Caco-2 (cell line): ENCODE measurements at regions of chr10 and their contacts with region 1.

Region 1: GRCh38 chr10:102132563-102133372 is at the start of gene PPRC1:
- DNase-seq: peak; percentile 97 to 99
- H3K4me3 ChIP-seq: peak within 1 kb of the TSS; percentile 92
- H3K4me3 Mint-ChIP-seq: peak within 1 kb of the TSS; percentile 94
- H3K27ac Mint-ChIP-seq: peak within 1 kb of the TSS; percentile 99
- H3K4me1 ChIP-seq: peaks cover 16% of the 10 kb centered on the region
- H3K4me1 Mint-ChIP-seq: peaks cover 7% of the 10 kb centered on the region
- H3K27me3 ChIP-seq: no peaks in the 10 kb centered on the region
- H3K27me3 Mint-ChIP-seq: no peaks in the 10 kb centered on the region
- CTCF ChIP-seq: peak; percentile 82 to 94
- total RNA-seq, gene PPRC1: 66.6 and 68.5 TPM in 2 replicates

Region 2: DNA sequence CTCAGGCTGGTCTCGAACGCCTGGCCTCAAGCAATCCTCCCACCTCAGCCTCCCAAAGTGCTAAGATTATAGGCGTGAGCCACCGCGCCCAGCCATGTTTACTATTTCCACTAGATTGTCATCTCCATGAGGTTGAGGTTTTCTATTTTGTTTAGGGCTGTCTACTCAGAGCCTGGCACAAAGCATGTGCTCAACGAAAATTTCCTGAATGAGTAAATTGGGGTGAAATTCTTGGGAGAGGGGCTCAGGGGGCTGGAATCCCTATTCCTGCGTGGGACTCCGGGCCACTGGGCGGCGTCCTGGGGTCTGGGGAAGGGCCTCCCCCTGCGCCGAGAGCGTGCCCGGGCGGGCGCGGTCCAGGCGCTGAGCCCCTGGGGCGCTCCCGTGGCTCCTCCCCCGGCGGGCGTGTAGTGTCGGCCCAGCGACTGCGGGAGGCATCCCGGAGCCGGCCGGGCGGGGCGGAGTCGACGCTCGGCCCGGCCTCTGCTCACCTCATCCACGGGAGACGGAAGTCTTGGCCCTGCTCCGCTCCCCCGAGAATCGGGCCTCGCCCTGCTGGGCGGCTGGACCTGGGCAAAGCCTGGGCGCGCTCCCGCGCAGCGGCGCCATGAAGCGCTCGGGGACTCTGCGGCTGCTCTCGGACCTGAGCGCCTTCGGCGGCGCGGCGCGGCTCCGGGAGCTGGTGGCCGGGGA is 67.8 kb before region 1 on chr10 and contains the start of gene HPS6:
- CTCF ChIA-PET with region 1: no interaction called
- POLR2A ChIA-PET with region 1: no interaction called
- intact Hi-C with region 1: loop called (anchors 5 kb)
- DNase-seq: peak; percentile 93 to 95
- H3K4me3 ChIP-seq: peak within 1 kb of the TSS; percentile 90
- H3K4me3 Mint-ChIP-seq: peak within 1 kb of the TSS; percentile 89
- H3K27ac Mint-ChIP-seq: peak within 1 kb of the TSS; percentile 88
- H3K4me1 ChIP-seq: peaks cover 9% of the 10 kb centered on the region
- H3K4me1 Mint-ChIP-seq: peaks cover 13% of the 10 kb centered on the region
- H3K27me3 ChIP-seq: no peaks in the 10 kb centered on the region
- H3K27me3 Mint-ChIP-seq: no peaks in the 10 kb centered on the region
- CTCF ChIP-seq: peak; percentile 17 to 32
- total RNA-seq, gene HPS6: 18.1 and 19.5 TPM in 2 replicates

Region 3: DNA sequence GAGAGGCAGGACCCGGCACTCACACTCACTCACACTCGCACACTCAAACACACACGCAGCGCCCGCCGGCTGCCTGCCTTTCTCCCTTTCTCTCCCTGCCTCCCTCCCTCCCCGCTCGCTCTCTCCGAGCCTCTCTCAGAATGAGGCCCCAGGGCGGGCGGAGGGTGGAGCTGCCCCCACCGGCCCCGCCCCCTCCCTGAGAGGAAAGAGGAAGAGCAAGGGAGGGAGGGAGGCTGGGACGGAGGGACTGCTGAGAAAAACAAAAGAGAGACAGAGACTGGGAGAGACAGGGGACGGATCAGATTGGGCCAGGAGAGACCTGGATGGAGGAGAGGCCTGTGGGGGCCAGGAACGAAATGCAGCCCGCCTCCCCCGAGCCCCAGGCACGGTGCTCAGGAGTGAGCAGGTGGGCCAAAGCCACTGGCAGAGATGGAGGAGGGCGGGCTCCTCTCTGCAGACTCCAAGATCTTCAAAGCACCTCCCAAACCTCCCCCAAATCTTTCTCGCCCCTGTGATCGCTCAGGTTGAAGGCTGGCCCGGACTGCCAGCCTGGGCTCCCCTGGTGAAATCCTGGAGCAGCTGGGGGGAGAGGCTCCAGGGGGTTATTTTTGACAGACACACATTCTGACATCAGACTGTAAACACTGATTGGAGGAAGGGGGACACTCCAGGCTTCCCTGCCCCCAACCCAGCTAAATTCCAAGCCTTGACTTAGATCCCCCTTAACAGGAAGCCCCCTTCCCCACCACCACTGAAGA is 17.7 kb before region 1 on chr10:
- CTCF ChIA-PET with region 1: interaction called, 3 read pairs
- POLR2A ChIA-PET with region 1: interaction called, 3 read pairs
- intact Hi-C with region 1: loop called (anchors 1 kb)
- DNase-seq: peak; percentile 88 to 89
- H3K4me3 ChIP-seq: peak overlapping the region; percentile 56
- H3K4me3 Mint-ChIP-seq: peak overlapping the region; percentile 95
- H3K27ac Mint-ChIP-seq: peak overlapping the region; percentile 94
- H3K4me1 ChIP-seq: peaks cover 26% of the 10 kb centered on the region
- H3K4me1 Mint-ChIP-seq: peaks cover 37% of the 10 kb centered on the region
- H3K27me3 ChIP-seq: no peaks in the 10 kb centered on the region
- H3K27me3 Mint-ChIP-seq: no peaks in the 10 kb centered on the region
- CTCF ChIP-seq: no peak

Region 4: GRCh38 chr10:102120142-102120990 is 12.4 kb before region 1 on chr10 and contains the start of gene LDB1:
- CTCF ChIA-PET with region 1: interaction called, 3 read pairs
- POLR2A ChIA-PET with region 1: no interaction called
- intact Hi-C with region 1: loop called (anchors 1 kb)
- DNase-seq: peak; percentile 78
- H3K4me3 ChIP-seq: peak within 1 kb of the TSS; percentile 90
- H3K4me3 Mint-ChIP-seq: peak within 1 kb of the TSS; percentile 77
- H3K27ac Mint-ChIP-seq: peak within 1 kb of the TSS; percentile 70
- H3K4me1 ChIP-seq: peaks cover 32% of the 10 kb centered on the region
- H3K4me1 Mint-ChIP-seq: peaks cover 25% of the 10 kb centered on the region
- H3K27me3 ChIP-seq: no peaks in the 10 kb centered on the region
- H3K27me3 Mint-ChIP-seq: no peaks in the 10 kb centered on the region
- CTCF ChIP-seq: no peak
- total RNA-seq, gene LDB1: 52.3 and 52.4 TPM in 2 replicates

Region 5: GRCh38 chr10:102151774-102152544 is 19.2 kb after region 1 on chr10 and contains the start of gene NOLC1:
- CTCF ChIA-PET with region 1: no interaction called
- POLR2A ChIA-PET with region 1: interaction called, 7 read pairs
- intact Hi-C with region 1: loop called (anchors 1 kb)
- DNase-seq: peak; percentile 99
- H3K4me3 ChIP-seq: peak within 1 kb of the TSS; percentile 87
- H3K4me3 Mint-ChIP-seq: peak within 1 kb of the TSS; percentile 91
- H3K27ac Mint-ChIP-seq: peak within 1 kb of the TSS; percentile 99
- H3K4me1 ChIP-seq: peaks cover 26% of the 10 kb centered on the region
- H3K4me1 Mint-ChIP-seq: peaks cover 30% of the 10 kb centered on the region
- H3K27me3 ChIP-seq: no peaks in the 10 kb centered on the region
- H3K27me3 Mint-ChIP-seq: no peaks in the 10 kb centered on the region
- CTCF ChIP-seq: no peak
- total RNA-seq, gene NOLC1: 137 and 147 TPM in 2 replicates

Region 6: GRCh38 chr10:102167861-102168260 is 35.1 kb after region 1 on chr10:
- CTCF ChIA-PET with region 1: no interaction called
- POLR2A ChIA-PET with region 1: no interaction called
- intact Hi-C with region 1: loop called (anchors 1 kb)
- DNase-seq: no peak
- H3K4me3 ChIP-seq: no peak overlapping the region
- H3K4me3 Mint-ChIP-seq: no peak overlapping the region
- H3K27ac Mint-ChIP-seq: no peak overlapping the region
- H3K4me1 ChIP-seq: no peaks in the 10 kb centered on the region
- H3K4me1 Mint-ChIP-seq: no peaks in the 10 kb centered on the region
- H3K27me3 ChIP-seq: no peaks in the 10 kb centered on the region
- H3K27me3 Mint-ChIP-seq: no peaks in the 10 kb centered on the region
- CTCF ChIP-seq: no peak